ENCODE measurements at regions of chr3 and their contacts with region 1.

Region 1: GRCh38 chr3:171187706-171188290 is 161.3 kb upstream of the SLC2A2 start:
- DNase-seq: no peak
- ATAC-seq: peak; percentile 56

Region 2: GRCh38 chr3:171230865-171231264 is 43.1 kb after region 1 on chr3:
- intact Hi-C with region 1: no loop called
- DNase-seq: peak; percentile 46
- ATAC-seq: no peak

Region 3: GRCh38 chr3:171320750-171321558 is 133.2 kb after region 1 on chr3:
- intact Hi-C with region 1: loop called (anchors 5 kb)
- DNase-seq: no peak
- ATAC-seq: peak; percentile 93